Activated T-helper 2 cell treated with anti-CD3 and anti-CD28 coated beads, Interferon-gamma antibody, Interleukin-2, Interleukin-4, amounts not matched to agents 10 μg/mL and 5 μg/mL and 100 μg/mL, durations not matched to agents 14 hours and 24 hours and 36 hours (primary cell): ENCODE measurements at regions of chr17 and their contacts with region 1.

Region 1: DNA sequence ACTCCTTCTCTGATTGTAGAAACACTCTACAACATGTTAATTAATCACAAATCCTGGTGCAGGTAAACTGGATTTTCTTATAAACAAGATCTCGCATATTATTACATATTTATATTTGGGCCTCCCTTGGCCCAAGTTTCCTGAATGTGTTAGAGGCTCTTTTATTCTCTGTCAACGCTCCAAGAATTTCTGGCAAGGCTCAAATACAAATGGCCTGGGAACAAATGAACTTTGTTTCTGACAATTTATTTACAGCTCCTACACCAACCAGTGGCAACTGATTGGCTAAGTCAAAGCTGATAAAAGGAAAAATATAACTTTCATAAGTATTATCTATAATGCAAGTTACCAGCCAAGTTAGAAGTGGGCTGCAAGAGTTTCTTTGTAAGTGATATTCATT is 64.9 kb upstream of the CORO6 start:
- DNase-seq: no peak
- H3K4me3 Mint-ChIP-seq: no peak overlapping the region
- H3K27ac Mint-ChIP-seq: no peak overlapping the region
- H3K4me1 Mint-ChIP-seq: peaks cover 12% of the 10 kb centered on the region
- H3K27me3 Mint-ChIP-seq: no peaks in the 10 kb centered on the region

Region 2: GRCh38 chr17:28985950-28986713 is 701.5 kb before region 1 on chr17:
- intact Hi-C with region 1: no loop called
- DNase-seq: no peak
- H3K4me3 Mint-ChIP-seq: no peak overlapping the region
- H3K27ac Mint-ChIP-seq: no peak overlapping the region
- H3K4me1 Mint-ChIP-seq: peaks cover 19% of the 10 kb centered on the region
- H3K27me3 Mint-ChIP-seq: peaks cover 2% of the 10 kb centered on the region

Region 3: GRCh38 chr17:29664743-29665480 is 22.7 kb before region 1 on chr17:
- intact Hi-C with region 1: loop called (anchors 1 kb)
- DNase-seq: no peak
- H3K4me3 Mint-ChIP-seq: no peak overlapping the region
- H3K27ac Mint-ChIP-seq: peak overlapping the region; percentile 77
- H3K4me1 Mint-ChIP-seq: peaks cover 31% of the 10 kb centered on the region
- H3K27me3 Mint-ChIP-seq: no peaks in the 10 kb centered on the region

Region 4: GRCh38 chr17:29709861-29710519 is 22.4 kb after region 1 on chr17:
- intact Hi-C with region 1: loop called (anchors 1 kb)
- DNase-seq: no peak
- H3K4me3 Mint-ChIP-seq: no peak overlapping the region
- H3K27ac Mint-ChIP-seq: no peak overlapping the region
- H3K4me1 Mint-ChIP-seq: peaks cover 44% of the 10 kb centered on the region
- H3K27me3 Mint-ChIP-seq: no peaks in the 10 kb centered on the region

Region 5: GRCh38 chr17:29716566-29716965 is 29.0 kb after region 1 on chr17:
- intact Hi-C with region 1: loop called (anchors 2 kb)
- DNase-seq: no peak
- H3K4me3 Mint-ChIP-seq: no peak overlapping the region
- H3K27ac Mint-ChIP-seq: no peak overlapping the region
- H3K4me1 Mint-ChIP-seq: peaks cover 32% of the 10 kb centered on the region
- H3K27me3 Mint-ChIP-seq: no peaks in the 10 kb centered on the region

Region 6: DNA sequence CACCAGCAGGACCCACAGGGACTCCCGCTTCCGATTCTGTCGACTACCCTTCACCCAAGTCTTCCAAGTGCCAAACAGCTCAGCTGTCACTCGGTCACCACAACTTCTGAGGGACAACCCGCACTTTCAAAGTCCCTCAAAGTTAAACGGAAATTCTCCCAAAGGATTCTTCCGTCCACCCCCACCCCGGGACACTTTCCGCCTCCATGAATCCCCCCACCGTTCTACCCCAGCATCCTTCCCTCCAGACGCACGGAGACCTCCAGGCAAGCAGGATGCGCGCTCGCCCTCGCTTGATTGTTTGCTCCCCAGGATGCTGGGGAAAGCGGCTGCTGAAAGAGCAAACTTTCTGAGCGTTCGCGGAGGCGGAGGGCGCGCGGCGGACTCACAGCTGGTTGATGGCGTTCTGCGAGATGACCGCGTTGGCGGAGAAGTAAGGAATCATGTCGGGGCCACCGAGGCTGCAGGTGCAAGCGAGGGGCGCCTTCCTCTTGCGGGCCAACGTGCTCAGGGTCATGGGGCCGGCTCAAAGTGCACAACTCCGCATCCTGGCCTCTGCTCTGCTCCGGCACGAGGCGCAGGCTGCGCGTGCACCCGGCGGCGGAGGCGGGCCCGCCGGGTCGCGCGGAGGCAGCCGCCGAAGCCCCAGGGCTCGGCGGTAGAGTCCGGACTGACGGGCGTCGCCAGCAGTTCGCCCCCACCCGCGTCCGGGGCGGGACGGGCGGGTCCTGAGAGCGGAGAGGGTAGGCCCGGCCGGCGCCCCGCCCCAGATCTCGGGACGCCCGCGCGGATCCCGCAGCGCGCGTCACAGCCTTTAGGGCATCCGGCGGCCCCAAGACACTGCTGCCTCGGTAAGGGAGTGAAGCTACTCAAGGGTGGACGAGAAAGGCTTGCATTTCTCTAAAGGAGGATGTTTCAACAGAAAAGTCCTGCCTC is 73.4 kb after region 1 on chr17:
- intact Hi-C with region 1: loop called (anchors 1 kb)
- DNase-seq: peak; percentile 90
- H3K4me3 Mint-ChIP-seq: peak overlapping the region; percentile 97
- H3K27ac Mint-ChIP-seq: peak overlapping the region; percentile 96
- H3K4me1 Mint-ChIP-seq: peaks cover 27% of the 10 kb centered on the region
- H3K27me3 Mint-ChIP-seq: no peaks in the 10 kb centered on the region

Region 7: GRCh38 chr17:29918922-29919856 is 231.6 kb after region 1 on chr17:
- intact Hi-C with region 1: no loop called
- DNase-seq: no peak
- H3K4me3 Mint-ChIP-seq: no peak overlapping the region
- H3K27ac Mint-ChIP-seq: no peak overlapping the region
- H3K4me1 Mint-ChIP-seq: peaks cover 14% of the 10 kb centered on the region
- H3K27me3 Mint-ChIP-seq: no peaks in the 10 kb centered on the region

Region 8: GRCh38 chr17:29977836-29978235 is 290.2 kb after region 1 on chr17:
- intact Hi-C with region 1: no loop called
- DNase-seq: no peak
- H3K4me3 Mint-ChIP-seq: no peak overlapping the region
- H3K27ac Mint-ChIP-seq: no peak overlapping the region
- H3K4me1 Mint-ChIP-seq: no peaks in the 10 kb centered on the region
- H3K27me3 Mint-ChIP-seq: peaks cover 23% of the 10 kb centered on the region